Activated CD8-positive, alpha-beta T cell treated with anti-CD3 and anti-CD28 coated beads for 36 hours (primary cell): ENCODE measurements at regions of chr1 and their contacts with region 1.

Region 1: GRCh38 chr1:119662034-119662437 is 14.0 kb upstream of the ZNF697 start:
- DNase-seq: no peak
- ATAC-seq: no peak
- H3K4me3 Mint-ChIP-seq: no peak overlapping the region
- H3K27ac Mint-ChIP-seq: no peak overlapping the region
- H3K4me1 Mint-ChIP-seq: no peaks in the 10 kb centered on the region
- H3K27me3 Mint-ChIP-seq: peaks cover 13% of the 10 kb centered on the region
- CTCF ChIP-seq: no peak

Region 2: DNA sequence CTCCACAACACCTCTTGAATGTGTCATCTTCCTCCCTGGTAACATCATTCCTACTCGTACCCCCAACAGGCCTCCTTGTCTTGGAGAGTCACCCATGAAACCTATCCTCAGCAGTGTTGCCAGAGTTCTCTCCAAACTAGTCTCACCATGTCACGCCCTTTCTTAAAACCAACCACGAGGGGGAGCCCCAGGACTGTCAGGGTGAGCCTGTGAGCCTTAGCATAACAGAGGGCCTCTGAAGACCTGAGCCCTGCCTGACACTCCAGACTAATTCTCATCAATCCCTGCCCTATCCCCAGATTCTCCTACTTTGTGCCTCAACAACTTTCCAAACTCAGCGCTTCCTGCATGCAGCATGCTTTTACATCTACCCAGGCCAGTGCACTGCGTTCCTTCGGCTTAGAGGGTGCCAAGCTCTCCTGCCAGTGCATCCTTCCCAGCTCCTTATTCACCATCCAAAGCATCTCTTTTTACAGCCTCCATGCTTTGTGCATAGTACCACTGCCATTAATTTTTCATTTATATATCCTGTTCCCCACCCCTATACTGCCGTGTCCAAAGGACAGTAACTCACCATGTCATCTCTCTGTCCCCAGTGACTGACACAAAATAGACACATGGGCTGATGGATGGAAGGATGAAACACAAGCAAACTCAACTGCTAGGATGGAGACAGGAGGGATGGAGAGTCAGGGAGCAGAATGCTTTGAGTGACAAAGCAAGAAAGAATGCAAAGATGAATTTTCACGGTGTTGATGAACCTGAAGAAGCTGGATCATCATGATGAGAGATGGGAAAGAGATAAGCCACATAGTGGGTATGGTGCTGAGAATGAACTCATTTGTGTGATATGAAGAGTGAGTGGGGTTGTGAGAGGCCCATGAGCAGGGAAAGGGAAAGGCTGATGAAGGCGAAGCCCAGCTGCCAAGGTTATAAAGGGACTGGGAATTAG is 48.0 kb before region 1 on chr1:
- CTCF ChIA-PET with region 1: interaction called, 24 read pairs
- POLR2A ChIA-PET with region 1: no interaction called
- intact Hi-C with region 1: loop called (anchors 5 kb)
- DNase-seq: peak; percentile 82
- ATAC-seq: peak; percentile 79
- H3K4me3 Mint-ChIP-seq: no peak overlapping the region
- H3K27ac Mint-ChIP-seq: no peak overlapping the region
- H3K4me1 Mint-ChIP-seq: no peaks in the 10 kb centered on the region
- H3K27me3 Mint-ChIP-seq: peaks cover 2% of the 10 kb centered on the region
- CTCF ChIP-seq: peak; percentile 75